ENCODE measurements at regions of chr1 and their contacts with region 1.

Region 1: DNA sequence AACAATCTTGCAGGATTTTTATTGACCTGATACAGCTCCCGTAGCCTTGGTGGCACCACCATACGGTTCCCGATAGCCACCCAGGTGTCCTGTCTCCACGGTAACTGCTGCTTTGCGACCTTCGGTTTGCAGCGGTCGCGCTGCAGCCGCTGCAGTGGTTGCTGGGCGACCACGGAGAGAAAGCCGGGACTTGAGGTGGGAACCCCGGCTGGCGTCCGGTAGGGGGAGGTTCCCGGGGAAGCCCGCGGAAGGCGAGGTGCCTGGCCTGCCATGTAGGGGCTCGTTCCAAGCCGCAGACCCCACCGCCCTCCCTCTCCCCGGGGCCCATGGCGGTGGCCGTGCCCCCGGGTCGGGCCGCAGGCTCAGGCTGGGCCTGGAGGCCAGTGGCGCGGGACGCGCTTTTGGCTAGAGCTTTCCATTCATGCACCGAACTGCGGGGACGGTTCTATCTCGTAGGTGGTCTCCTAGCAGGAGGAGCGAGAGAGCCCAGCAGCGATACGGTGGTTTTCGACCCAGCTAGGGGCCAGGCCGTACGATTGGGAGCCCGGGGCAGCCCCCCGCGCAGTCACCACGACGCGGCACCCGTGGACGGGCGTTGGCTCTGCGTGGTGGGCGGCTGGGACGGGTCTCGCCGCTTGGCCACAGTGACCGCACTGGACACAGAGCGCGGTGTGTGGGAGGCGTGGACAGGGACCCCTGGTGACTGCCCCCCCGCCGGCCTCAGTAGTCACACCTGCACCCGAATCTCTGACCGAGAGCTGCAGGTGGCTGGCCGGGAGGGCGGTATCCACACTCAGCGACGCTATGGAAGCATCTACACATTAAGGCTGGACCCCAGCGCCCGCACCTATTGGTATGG is at the start of gene KLHDC9:
- DNase-seq: peak; percentile 73
- H3K4me3 Mint-ChIP-seq: peak within 1 kb of the TSS; percentile 74
- H3K27ac Mint-ChIP-seq: peak within 1 kb of the TSS; percentile 84
- H3K4me1 Mint-ChIP-seq: peaks cover 23% of the 10 kb centered on the region
- H3K27me3 Mint-ChIP-seq: no peaks in the 10 kb centered on the region
- total RNA-seq, gene KLHDC9: 0.30 TPM in 1 of 2 experiments, not detected in the other

Region 2: DNA sequence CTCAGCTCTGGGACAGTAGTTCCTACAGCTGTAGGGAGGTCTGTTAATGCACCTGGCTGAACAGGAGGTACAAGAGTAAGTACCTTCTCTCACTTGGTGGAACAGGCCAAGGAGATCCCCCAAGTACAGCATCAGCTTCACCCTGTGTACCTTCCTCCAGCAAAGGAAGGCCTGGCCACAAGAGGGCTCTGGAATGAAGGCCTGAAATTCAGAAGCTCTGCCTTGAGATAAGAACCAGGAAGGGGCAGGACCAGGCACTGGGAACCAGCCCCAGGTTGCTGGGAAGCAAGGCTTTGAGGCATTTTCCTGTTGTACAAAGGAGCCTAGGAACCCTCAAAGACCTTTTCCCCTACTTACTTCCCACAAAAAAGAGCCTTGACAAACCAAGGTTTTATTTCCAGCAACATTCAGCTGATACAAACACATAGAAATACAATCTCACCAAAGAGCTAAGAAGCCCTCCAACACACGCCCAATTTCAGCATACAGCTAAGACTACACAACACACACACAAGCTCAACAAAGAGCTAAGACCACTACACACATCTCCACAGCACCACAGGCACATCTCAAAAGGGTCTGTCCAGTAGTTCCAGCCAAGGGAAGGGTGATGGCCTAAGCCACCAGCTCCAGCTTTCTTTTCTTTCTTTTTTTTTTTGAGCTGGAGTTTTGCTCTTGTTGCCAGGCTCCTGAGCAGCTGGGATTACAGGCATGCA is 101.0 kb before region 1 on chr1:
- CTCF ChIA-PET with region 1: interaction called, 14 read pairs
- POLR2A ChIA-PET with region 1: no interaction called
- DNase-seq: peak; percentile 61
- H3K4me3 Mint-ChIP-seq: no peak overlapping the region
- H3K27ac Mint-ChIP-seq: no peak overlapping the region
- H3K4me1 Mint-ChIP-seq: peaks cover 6% of the 10 kb centered on the region
- H3K27me3 Mint-ChIP-seq: no peaks in the 10 kb centered on the region

Region 3: DNA sequence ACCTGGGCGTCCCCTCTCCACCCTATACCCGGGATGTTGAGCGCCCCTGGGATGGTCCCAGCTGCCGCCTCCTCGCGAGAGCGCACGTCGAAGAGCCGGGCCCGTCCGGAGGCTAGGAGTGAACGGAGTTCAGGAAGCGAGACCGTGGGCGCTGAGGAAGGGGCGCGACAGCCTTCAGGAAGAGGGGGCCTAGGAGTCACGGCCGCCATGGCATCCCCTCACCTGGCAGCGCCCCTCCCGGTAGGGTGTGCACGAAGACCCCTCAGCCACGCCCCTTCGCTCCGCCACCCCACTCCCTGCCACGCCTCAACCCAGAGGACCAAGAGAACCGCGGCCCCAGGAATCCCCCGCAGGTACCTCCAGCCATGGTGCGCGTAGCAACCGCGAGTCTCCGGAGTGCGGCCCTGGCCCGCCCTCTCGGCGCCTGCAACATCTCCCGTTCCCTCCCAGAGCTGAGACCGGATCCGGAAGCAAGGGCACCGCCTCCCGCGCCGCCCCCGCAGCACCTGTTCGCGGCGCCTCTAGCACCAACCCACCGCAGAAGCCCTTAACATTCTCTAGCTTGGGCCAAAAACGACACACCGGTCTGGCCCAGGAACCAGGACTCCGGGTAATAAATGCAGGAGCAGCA is 59.8 kb before region 1 on chr1 and contains the start of gene TSTD1:
- CTCF ChIA-PET with region 1: interaction called, 36 read pairs
- POLR2A ChIA-PET with region 1: no interaction called
- DNase-seq: peak; percentile 91
- H3K4me3 Mint-ChIP-seq: peak within 1 kb of the TSS; percentile 81
- H3K27ac Mint-ChIP-seq: peak within 1 kb of the TSS; percentile 94
- H3K4me1 Mint-ChIP-seq: peaks cover 44% of the 10 kb centered on the region
- H3K27me3 Mint-ChIP-seq: no peaks in the 10 kb centered on the region
- total RNA-seq, gene TSTD1: 33.5 to 43.6 TPM

Region 4: DNA sequence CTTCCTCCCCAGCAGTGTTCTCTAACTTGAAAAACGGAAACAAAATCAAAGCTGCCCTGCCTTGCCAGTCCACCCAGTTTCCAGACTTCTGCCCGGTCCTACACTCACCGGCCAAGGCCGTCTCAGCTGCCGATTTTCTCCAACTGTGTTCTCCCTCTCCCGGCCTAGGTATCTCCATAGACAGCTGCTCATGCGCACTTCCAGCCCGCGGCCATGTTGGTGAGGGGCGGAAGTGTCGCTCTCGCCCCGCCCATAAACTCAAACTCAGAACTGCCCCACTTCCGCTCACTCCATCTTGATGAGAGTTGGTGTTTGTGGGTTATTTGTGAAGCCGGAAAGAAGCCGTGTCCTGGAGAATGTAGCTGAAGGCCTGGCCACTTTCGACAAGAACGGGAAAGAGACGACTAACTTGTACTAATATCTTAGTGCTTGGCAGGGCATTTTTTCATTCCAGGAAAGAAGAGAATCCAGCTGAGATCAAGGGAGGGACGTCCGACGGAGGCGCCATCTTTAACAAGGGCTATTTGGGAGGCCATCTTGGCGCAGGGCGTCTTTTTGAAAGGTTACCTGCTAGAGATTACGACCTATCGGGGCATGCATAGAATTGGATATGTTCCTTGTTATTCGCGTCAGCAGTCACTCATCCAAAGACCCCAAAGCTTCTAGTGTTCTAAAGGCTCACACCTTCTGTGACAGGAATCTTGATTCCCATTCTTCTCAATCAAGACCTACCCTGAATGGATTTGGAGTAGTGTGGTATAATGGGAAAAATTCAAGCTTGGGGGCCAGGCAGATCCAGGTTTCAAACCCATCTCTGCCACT is 52.5 kb before region 1 on chr1 and contains the start of gene USF1:
- CTCF ChIA-PET with region 1: interaction called, 36 read pairs
- POLR2A ChIA-PET with region 1: interaction called, 3 read pairs
- DNase-seq: peak; percentile 95
- H3K4me3 Mint-ChIP-seq: peak within 1 kb of the TSS; percentile 79
- H3K27ac Mint-ChIP-seq: peak within 1 kb of the TSS; percentile 97
- H3K4me1 Mint-ChIP-seq: peaks cover 49% of the 10 kb centered on the region
- H3K27me3 Mint-ChIP-seq: no peaks in the 10 kb centered on the region
- total RNA-seq, gene USF1: 78.0 to 81.2 TPM

Region 5: GRCh38 chr1:161071886-161072371 is 26.5 kb before region 1 on chr1:
- CTCF ChIA-PET with region 1: interaction called, 185 read pairs
- POLR2A ChIA-PET with region 1: interaction called, 4 read pairs
- DNase-seq: peak; percentile 63
- H3K4me3 Mint-ChIP-seq: no peak overlapping the region
- H3K27ac Mint-ChIP-seq: peak overlapping the region; percentile 43
- H3K4me1 Mint-ChIP-seq: peaks cover 51% of the 10 kb centered on the region
- H3K27me3 Mint-ChIP-seq: no peaks in the 10 kb centered on the region

Region 6: GRCh38 chr1:161082991-161083742 is 15.3 kb before region 1 on chr1:
- CTCF ChIA-PET with region 1: interaction called, 185 read pairs
- POLR2A ChIA-PET with region 1: no interaction called
- DNase-seq: no peak
- H3K4me3 Mint-ChIP-seq: no peak overlapping the region
- H3K27ac Mint-ChIP-seq: no peak overlapping the region
- H3K4me1 Mint-ChIP-seq: no peaks in the 10 kb centered on the region
- H3K27me3 Mint-ChIP-seq: no peaks in the 10 kb centered on the region

Region 7: GRCh38 chr1:161117759-161118581 is 19.5 kb after region 1 on chr1 and contains the starts of genes NIT1 and PFDN2:
- CTCF ChIA-PET with region 1: interaction called, 25 read pairs
- POLR2A ChIA-PET with region 1: no interaction called
- DNase-seq: peak; percentile 86
- H3K4me3 Mint-ChIP-seq: peak within 1 kb of the TSS; percentile 94
- H3K27ac Mint-ChIP-seq: peak within 1 kb of the TSS; percentile 92
- H3K4me1 Mint-ChIP-seq: peaks cover 71% of the 10 kb centered on the region
- H3K27me3 Mint-ChIP-seq: no peaks in the 10 kb centered on the region
- total RNA-seq, gene NIT1: 37.7 to 39.0 TPM
- total RNA-seq, gene PFDN2: 46.0 to 56.0 TPM